ENCODE measurements at regions of chr12 and their contacts with region 1.

Region 1: GRCh38 chr12:60849723-60850122 is 1253.9 kb downstream of the SLC16A7 start:
- DNase-seq: no peak
- H3K4me3 ChIP-seq: no peak overlapping the region
- H3K27ac ChIP-seq: no peak overlapping the region
- H3K4me1 ChIP-seq: no peaks in the 10 kb centered on the region
- H3K27me3 ChIP-seq: no peaks in the 10 kb centered on the region
- CTCF ChIP-seq: no peak
- POLR2A ChIP-seq: no peak

Region 2: GRCh38 chr12:59858508-59859170 is 991.1 kb before region 1 on chr12:
- intact Hi-C with region 1: loop called (anchors 5 kb)
- DNase-seq: no peak
- H3K4me3 ChIP-seq: no peak overlapping the region
- H3K27ac ChIP-seq: no peak overlapping the region
- H3K4me1 ChIP-seq: no peaks in the 10 kb centered on the region
- H3K27me3 ChIP-seq: no peaks in the 10 kb centered on the region
- CTCF ChIP-seq: no peak
- POLR2A ChIP-seq: no peak